ENCODE measurements at regions of chr9 and their contacts with region 1.

Region 1: GRCh38 chr9:111994831-111995458 is 98.3 kb downstream of the UGCG start:
- DNase-seq: no peak
- H3K4me3 Mint-ChIP-seq: peak overlapping the region; percentile 34
- H3K27ac Mint-ChIP-seq: peak overlapping the region; percentile 76
- H3K4me1 Mint-ChIP-seq: peaks cover 23% of the 10 kb centered on the region
- H3K27me3 Mint-ChIP-seq: peaks cover 17% of the 10 kb centered on the region

Region 2: GRCh38 chr9:111945216-111945615 is 49.7 kb before region 1 on chr9:
- intact Hi-C with region 1: loop called (anchors 2 kb)
- DNase-seq: peak; percentile 75
- H3K4me3 Mint-ChIP-seq: no peak overlapping the region
- H3K27ac Mint-ChIP-seq: no peak overlapping the region
- H3K4me1 Mint-ChIP-seq: peaks cover 18% of the 10 kb centered on the region
- H3K27me3 Mint-ChIP-seq: peaks cover 6% of the 10 kb centered on the region

Region 3: GRCh38 chr9:111965566-111966019 is 29.4 kb before region 1 on chr9:
- intact Hi-C with region 1: loop called (anchors 2 kb)
- DNase-seq: no peak
- H3K4me3 Mint-ChIP-seq: no peak overlapping the region
- H3K27ac Mint-ChIP-seq: peak overlapping the region; percentile 8
- H3K4me1 Mint-ChIP-seq: peaks cover 7% of the 10 kb centered on the region
- H3K27me3 Mint-ChIP-seq: peaks cover 11% of the 10 kb centered on the region

Region 4: GRCh38 chr9:112012026-112012902 is 17.3 kb after region 1 on chr9:
- intact Hi-C with region 1: loop called (anchors 1 kb)
- DNase-seq: no peak
- H3K4me3 Mint-ChIP-seq: peak overlapping the region; percentile 15
- H3K27ac Mint-ChIP-seq: peak overlapping the region; percentile 64
- H3K4me1 Mint-ChIP-seq: peaks cover 20% of the 10 kb centered on the region
- H3K27me3 Mint-ChIP-seq: peaks cover 36% of the 10 kb centered on the region

Region 5: DNA sequence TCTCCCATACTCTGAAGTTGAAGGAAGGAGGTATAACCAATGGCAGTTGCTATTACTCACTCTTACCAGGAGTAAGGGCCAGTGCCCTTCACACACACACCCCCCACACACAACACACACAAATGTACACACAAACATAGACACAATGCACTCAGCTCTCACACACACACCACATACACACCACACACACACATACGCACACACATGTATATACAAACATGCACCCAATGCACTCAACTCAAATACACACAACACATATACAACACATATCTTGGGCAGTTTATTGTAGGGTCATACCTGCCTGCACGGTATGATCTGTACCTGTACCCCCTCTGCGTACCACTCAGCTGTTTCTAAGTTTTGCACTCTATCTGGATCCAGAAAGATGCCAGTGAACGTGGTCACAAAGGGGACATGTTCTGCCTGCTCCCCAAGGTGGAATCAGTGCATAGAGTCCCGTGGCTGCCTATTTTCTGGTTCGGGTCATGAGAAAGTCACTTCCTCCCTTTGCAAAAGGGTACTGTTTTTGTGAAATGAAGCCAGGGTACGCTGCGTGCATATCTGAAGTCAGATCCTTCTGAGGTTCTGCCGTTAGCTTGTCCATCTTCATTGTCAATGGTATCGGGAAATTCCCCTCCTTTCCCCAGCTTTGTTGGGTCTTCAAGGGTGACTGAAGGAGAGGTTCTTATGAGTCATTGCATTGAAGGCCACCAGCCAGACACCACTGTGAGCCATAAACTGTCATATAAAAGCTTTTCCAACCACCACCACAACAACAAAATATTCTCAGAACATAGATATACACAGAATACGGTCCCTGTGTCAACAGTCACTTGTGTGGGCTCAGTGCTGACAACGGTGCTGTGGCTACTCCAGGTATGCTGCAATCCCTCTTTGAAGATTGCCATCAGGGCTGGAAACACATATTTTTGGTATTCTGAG is 33.6 kb after region 1 on chr9:
- intact Hi-C with region 1: loop called (anchors 2 kb)
- DNase-seq: peak; percentile 68
- H3K4me3 Mint-ChIP-seq: no peak overlapping the region
- H3K27ac Mint-ChIP-seq: peak overlapping the region; percentile 36
- H3K4me1 Mint-ChIP-seq: peaks cover 38% of the 10 kb centered on the region
- H3K27me3 Mint-ChIP-seq: peaks cover 15% of the 10 kb centered on the region

Region 6: GRCh38 chr9:112061152-112061740 is 66.3 kb after region 1 on chr9:
- intact Hi-C with region 1: loop called (anchors 2 kb)
- DNase-seq: peak; percentile 82
- H3K4me3 Mint-ChIP-seq: no peak overlapping the region
- H3K27ac Mint-ChIP-seq: peak overlapping the region; percentile 48
- H3K4me1 Mint-ChIP-seq: peaks cover 22% of the 10 kb centered on the region
- H3K27me3 Mint-ChIP-seq: no peaks in the 10 kb centered on the region

Region 7: GRCh38 chr9:112841261-112841660 is 846.3 kb after region 1 on chr9:
- intact Hi-C with region 1: no loop called
- DNase-seq: no peak
- H3K4me3 Mint-ChIP-seq: no peak overlapping the region
- H3K27ac Mint-ChIP-seq: no peak overlapping the region
- H3K4me1 Mint-ChIP-seq: peaks cover 12% of the 10 kb centered on the region
- H3K27me3 Mint-ChIP-seq: no peaks in the 10 kb centered on the region